HCT116 (cell line): ENCODE measurements at regions of chr9 and their contacts with region 1.

Region 1: DNA sequence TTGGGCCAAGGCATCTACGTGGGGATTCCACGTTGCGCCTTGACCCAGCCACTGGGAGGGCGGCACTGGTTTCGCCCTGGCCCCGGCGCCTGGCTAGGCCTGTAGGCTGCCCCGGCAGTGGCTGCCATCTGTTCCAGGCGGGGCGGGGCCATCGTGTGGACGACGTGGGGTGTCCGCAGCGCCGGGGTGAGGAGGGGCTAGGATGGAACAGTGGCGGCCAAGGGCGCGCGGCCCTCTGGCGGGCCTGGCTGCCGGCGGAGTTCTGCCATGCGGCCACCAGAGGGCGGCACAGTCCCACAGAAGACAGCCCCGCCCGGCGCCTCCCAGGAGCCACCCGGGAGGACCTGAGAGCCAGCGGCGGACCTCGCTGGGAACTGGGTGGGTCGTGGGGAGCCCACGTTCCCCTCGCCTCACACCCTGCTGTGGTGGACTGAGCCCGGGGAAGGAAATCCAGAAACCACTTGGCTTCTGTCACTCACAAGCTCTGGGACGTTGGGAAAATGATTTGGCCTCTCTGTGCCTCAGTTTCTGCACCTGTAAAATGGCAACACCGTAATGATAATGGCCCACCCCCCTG is 22.6 kb upstream of the RAPGEF1 start:
- DNase-seq: peak; percentile 43
- ATAC-seq: peak; percentile 100
- H3K4me3 ChIP-seq: peak overlapping the region in 1 of 2 experiments; percentile 20; a peak in 2 of 4 replicates
- H3K27ac ChIP-seq: no peak overlapping the region
- H3K4me1 ChIP-seq: peaks cover 4 to 9% of the 10 kb centered on the region in 2 experiments; a peak in 3 of 4 replicates
- H3K27me3 ChIP-seq: peaks cover 6% of the 10 kb centered on the region; the same call in 1 of the 2 replicates
- CTCF ChIP-seq: peak; percentile 71 to 88 (median 73)
- POLR2A ChIP-seq: no peak
- RAD21 ChIP-seq: peak; percentile 97

Region 2: GRCh38 chr9:131733541-131734061 is 28.8 kb before region 1 on chr9:
- CTCF ChIA-PET with region 1: no interaction called
- POLR2A ChIA-PET with region 1: no interaction called
- RAD21 ChIA-PET with region 1: no interaction called
- intact Hi-C with region 1: no loop called
- DNase-seq: no peak
- ATAC-seq: peak; percentile 79
- H3K4me3 ChIP-seq: no peak overlapping the region
- H3K27ac ChIP-seq: peak overlapping the region; percentile 52
- H3K4me1 ChIP-seq: peaks cover 28 to 38% of the 10 kb centered on the region in 2 experiments
- H3K27me3 ChIP-seq: no peaks in the 10 kb centered on the region
- CTCF ChIP-seq: no peak
- POLR2A ChIP-seq: no peak
- RAD21 ChIP-seq: no peak

Region 3: DNA sequence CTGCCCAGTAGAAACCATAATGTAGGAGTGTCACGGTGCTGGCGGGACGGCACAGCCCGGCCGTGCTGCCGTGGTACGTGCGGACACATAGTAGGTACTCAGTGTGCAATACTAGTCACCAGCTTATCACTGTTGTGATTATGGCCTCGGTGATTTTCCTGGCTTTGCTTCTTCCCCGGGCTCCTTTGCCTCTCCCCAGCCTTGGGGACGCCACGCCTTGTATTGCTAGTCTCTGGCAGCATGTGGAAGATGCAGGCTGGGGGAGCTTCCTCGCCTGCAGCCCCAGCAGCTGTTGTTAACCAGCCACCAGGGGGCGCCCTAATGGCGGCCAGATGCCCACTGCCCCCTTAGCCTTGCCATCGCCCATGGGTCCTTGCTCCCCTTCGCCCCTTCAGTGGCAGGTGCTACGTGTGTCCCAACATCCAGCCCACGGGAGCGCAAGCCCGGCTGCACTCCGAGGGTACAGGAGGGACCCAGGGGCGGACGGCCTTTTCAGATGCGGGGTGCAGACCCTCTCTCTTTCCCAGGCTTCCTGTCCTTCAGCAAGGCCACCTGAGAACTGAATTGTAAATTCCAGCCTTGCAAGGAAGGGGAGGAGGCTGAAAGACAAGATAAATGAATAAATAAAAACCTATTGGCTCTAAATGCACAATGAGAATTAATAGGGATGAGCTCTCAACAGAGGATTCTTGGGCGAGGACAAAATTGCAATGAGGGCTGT is 407.4 kb after region 1 on chr9:
- CTCF ChIA-PET with region 1: no interaction called
- POLR2A ChIA-PET with region 1: no interaction called
- RAD21 ChIA-PET with region 1: no interaction called
- intact Hi-C with region 1: loop called (anchors 5 kb)
- DNase-seq: peak; percentile 29
- ATAC-seq: peak; percentile 80
- H3K4me3 ChIP-seq: no peak overlapping the region
- H3K27ac ChIP-seq: no peak overlapping the region
- H3K4me1 ChIP-seq: no peaks in the 10 kb centered on the region
- H3K27me3 ChIP-seq: no peaks in the 10 kb centered on the region
- CTCF ChIP-seq: peak; percentile 75 to 94 (median 94); a peak in 5 of 6 replicates
- POLR2A ChIP-seq: no peak
- RAD21 ChIP-seq: peak; percentile 73

Region 4: GRCh38 chr9:132249123-132249522 is 486.7 kb after region 1 on chr9:
- CTCF ChIA-PET with region 1: interaction called, 12 read pairs
- POLR2A ChIA-PET with region 1: no interaction called
- RAD21 ChIA-PET with region 1: interaction called in 1 of 2 experiments, 3 read pairs
- intact Hi-C with region 1: loop called (anchors 1 kb)
- DNase-seq: no peak
- ATAC-seq: no peak
- H3K4me3 ChIP-seq: no peak overlapping the region
- H3K27ac ChIP-seq: no peak overlapping the region
- H3K4me1 ChIP-seq: peaks cover 0 to 3% of the 10 kb centered on the region in 2 experiments; a peak in 1 of 4 replicates
- H3K27me3 ChIP-seq: no peaks in the 10 kb centered on the region
- CTCF ChIP-seq: no peak
- POLR2A ChIP-seq: no peak
- RAD21 ChIP-seq: no peak

Region 5: GRCh38 chr9:132268725-132269352 is 506.4 kb after region 1 on chr9:
- CTCF ChIA-PET with region 1: interaction called, 4 read pairs
- POLR2A ChIA-PET with region 1: no interaction called
- RAD21 ChIA-PET with region 1: no interaction called
- intact Hi-C with region 1: loop called (anchors 5 kb)
- DNase-seq: peak; percentile 43
- ATAC-seq: peak; percentile 83
- H3K4me3 ChIP-seq: no peak overlapping the region
- H3K27ac ChIP-seq: peak overlapping the region; percentile 97; the same call in 1 of the 2 replicates
- H3K4me1 ChIP-seq: peaks cover 9 to 29% of the 10 kb centered on the region in 2 experiments; a peak in 3 of 4 replicates
- H3K27me3 ChIP-seq: no peaks in the 10 kb centered on the region
- CTCF ChIP-seq: peak; percentile 44 to 96 (median 87); a peak in 5 of 6 replicates
- POLR2A ChIP-seq: no peak
- RAD21 ChIP-seq: peak; percentile 49

Region 6: DNA sequence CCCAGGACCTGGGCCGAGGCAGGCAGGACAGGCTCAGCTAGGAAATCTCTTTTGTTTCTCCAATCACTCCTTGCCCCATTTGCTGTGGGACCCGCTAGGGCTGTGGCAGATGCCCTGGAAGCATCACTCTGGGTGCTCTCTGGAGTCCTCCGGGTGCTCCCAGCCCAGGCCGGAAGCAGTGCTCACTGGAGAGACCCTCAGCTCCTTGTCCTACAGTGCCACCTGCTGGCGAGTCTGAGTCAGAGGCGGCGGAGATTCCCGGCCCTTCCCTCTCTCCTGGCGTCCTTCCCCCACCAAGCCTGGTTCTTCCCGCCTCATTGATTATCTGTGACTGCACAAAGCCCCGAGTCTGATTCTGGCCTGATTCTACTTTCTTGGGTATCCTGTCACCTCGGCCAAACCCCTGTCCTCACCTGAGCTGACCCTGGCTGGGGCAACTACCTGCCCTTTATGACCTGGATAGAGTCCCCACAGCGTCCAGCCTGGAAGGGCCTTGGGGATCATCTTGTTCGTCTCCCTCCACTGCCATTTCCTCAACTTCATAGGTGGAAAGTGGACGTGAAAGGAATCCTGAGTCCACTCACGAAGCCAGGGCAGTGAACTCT is 812.7 kb after region 1 on chr9:
- CTCF ChIA-PET with region 1: no interaction called
- POLR2A ChIA-PET with region 1: no interaction called
- RAD21 ChIA-PET with region 1: no interaction called
- intact Hi-C with region 1: loop called (anchors 5 kb)
- DNase-seq: peak; percentile 62
- ATAC-seq: peak; percentile 96
- H3K4me3 ChIP-seq: no peak overlapping the region
- H3K27ac ChIP-seq: no peak overlapping the region
- H3K4me1 ChIP-seq: peaks cover 0 to 6% of the 10 kb centered on the region in 2 experiments; a peak in 2 of 4 replicates
- H3K27me3 ChIP-seq: peaks cover 20% of the 10 kb centered on the region
- CTCF ChIP-seq: peak; percentile 78 to 90 (median 86)
- POLR2A ChIP-seq: no peak
- RAD21 ChIP-seq: peak; percentile 96